Calu3 (cell line): ENCODE measurements at regions of chr10 and their contacts with region 1.

Region 1: DNA sequence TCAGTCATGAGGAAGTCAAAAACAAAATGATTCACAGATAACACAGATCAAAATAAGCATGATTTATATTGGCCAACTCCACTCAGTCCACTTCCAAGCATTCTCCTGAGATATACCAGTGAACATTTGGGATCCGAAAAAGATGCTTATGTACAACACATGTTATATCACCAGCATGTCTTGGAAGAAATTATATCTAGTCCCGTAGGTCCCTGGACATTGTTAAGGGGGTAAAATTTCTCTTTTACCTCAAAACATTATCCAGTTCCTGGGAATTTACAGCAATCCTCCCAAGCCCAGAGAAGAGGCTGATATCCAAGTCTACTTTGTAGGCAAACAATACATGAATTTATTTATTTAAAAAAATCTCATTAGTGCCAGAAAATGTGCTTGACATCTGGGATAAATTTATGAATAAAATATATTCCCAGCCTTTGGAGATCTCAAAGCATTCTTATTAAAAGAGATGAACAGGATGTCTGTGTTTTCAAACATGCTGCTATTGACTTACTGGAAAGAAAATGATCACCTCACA is 582.2 kb upstream of the ZWINT start:
- DNase-seq: no peak
- H3K4me3 Mint-ChIP-seq: no peak overlapping the region
- H3K27ac Mint-ChIP-seq: no peak overlapping the region
- H3K4me1 Mint-ChIP-seq: no peaks in the 10 kb centered on the region
- H3K27me3 Mint-ChIP-seq: no peaks in the 10 kb centered on the region
- CTCF ChIP-seq: no peak

Region 2: DNA sequence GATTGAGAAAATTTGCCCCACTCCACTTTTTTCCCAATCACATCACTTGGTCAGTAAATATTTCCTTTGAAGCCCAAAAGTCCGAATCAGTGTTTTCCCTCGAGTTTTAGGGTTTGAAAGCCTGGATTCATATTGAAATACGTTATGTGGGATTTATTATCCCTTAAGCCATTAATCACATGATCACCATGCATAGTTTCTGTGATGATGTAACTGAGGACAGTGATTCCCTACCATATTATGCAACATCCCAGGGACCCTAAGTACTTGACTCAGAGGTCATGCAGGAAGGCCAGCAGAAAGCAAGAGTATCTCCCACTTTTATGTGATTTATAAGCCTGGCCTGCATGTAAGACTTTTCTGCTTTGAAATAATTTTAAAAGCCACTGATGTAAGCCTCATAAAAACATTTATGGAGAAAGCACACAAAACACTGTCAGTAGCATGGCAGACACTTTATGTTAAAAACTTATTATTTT is 48.3 kb after region 1 on chr10:
- CTCF ChIA-PET with region 1: no interaction called
- intact Hi-C with region 1: no loop called
- DNase-seq: no peak
- H3K4me3 Mint-ChIP-seq: no peak overlapping the region
- H3K27ac Mint-ChIP-seq: no peak overlapping the region
- H3K4me1 Mint-ChIP-seq: no peaks in the 10 kb centered on the region
- H3K27me3 Mint-ChIP-seq: no peaks in the 10 kb centered on the region
- CTCF ChIP-seq: no peak

Region 3: GRCh38 chr10:57186201-57186600 is 242.9 kb after region 1 on chr10:
- CTCF ChIA-PET with region 1: interaction called, 10 read pairs
- intact Hi-C with region 1: no loop called
- DNase-seq: no peak
- H3K4me3 Mint-ChIP-seq: no peak overlapping the region
- H3K27ac Mint-ChIP-seq: no peak overlapping the region
- H3K4me1 Mint-ChIP-seq: peaks cover 9% of the 10 kb centered on the region
- H3K27me3 Mint-ChIP-seq: no peaks in the 10 kb centered on the region
- CTCF ChIP-seq: no peak